Naive thymus-derived CD8-positive, alpha-beta T cell (primary cell): ENCODE measurements at regions of chr6 and their contacts with region 1.

Region 1: DNA sequence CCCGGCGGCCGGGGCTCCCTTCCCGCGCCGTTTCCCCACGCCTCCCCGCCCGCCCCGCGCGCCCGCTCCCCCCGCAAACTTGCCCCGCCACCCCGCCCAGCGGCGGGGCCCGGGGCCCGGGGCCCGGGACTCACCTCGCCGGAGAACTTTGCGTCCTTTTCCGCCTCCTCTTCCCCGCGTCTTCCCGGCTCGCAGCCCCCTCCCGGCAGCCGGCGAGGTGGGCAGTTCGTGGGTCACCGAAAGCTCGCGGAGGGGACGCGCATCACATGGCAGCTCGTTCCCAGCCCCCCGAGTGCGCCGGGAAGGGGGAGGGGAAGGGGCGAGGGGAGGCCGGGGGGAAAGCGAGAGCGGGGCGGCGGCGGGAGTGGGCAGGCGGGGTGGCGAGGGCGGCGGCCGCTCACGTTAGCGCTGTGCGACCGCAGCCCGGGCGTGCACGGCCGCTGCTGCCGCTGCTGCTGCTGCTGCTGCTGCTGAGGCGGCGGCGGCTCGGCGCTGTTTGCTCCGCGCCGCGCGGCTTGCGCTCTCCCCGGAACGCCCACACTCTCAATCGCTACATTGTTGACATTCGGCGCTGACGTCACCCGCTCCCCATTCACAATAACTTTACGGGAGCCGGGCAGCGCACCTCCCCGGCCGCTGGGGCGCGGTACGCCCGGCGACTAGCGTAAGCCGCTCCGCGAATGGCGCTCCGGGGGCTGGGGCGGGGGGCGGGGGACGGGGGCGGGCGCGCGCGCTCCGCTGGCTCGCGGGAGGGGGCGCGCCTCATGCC is at the start of gene BACH2:
- DNase-seq: peak; percentile 87 to 98 (median 95)
- ATAC-seq: peak; percentile 69 to 73
- H3K4me3 Mint-ChIP-seq: peak within 1 kb of the TSS; percentile 84 to 99 (median 92)
- H3K27ac Mint-ChIP-seq: peak within 1 kb of the TSS; percentile 89 to 99 (median 97)
- H3K4me1 Mint-ChIP-seq: peaks cover 16 to 46% (median 34%) of the 10 kb centered on the region in 4 donors
- H3K27me3 Mint-ChIP-seq: no peaks in the 10 kb centered on the region
- polyA plus RNA-seq, gene BACH2: 17.5 to 29.3 (median 21.7) TPM

Region 2: GRCh38 chr6:90216072-90216977 is 80.2 kb before region 1 on chr6:
- POLR2A ChIA-PET with region 1: interaction called, 27 read pairs
- DNase-seq: peak; percentile 34 to 76 (median 63)
- ATAC-seq: peak; percentile 36 to 64
- H3K4me3 Mint-ChIP-seq: peak overlapping the region in 8 of 10 donors; percentile 52 to 79 (median 71)
- H3K27ac Mint-ChIP-seq: no peak overlapping the region
- H3K4me1 Mint-ChIP-seq: peaks cover 24 to 37% (median 31%) of the 10 kb centered on the region in 4 donors
- H3K27me3 Mint-ChIP-seq: no peaks in the 10 kb centered on the region

Region 3: DNA sequence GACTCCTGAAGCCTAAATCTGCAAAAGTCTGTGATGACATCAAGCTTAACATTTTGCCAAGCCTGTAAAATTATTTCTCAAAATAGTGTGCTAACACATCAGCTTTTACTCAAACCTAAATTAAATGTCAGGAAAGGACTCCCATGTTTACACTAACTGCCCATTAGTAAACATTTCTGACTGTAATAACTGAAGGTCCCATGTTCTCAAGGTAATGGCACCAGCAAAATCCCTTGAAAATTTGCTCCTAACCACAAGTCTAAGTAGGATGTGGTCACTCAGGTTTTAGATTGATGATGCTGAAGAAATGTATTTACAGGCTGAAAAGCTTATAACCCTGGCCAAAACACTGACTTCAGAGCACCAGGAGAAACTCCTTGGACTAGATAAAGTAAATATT is 32.9 kb before region 1 on chr6:
- POLR2A ChIA-PET with region 1: interaction called, 17 read pairs
- DNase-seq: no peak
- ATAC-seq: no peak
- H3K4me3 Mint-ChIP-seq: peak overlapping the region in 6 of 10 donors; percentile 28 to 70 (median 48)
- H3K27ac Mint-ChIP-seq: peak overlapping the region; percentile 14 to 99 (median 92)
- H3K4me1 Mint-ChIP-seq: peaks cover 43 to 96% (median 94%) of the 10 kb centered on the region in 4 donors
- H3K27me3 Mint-ChIP-seq: no peaks in the 10 kb centered on the region

Region 4: DNA sequence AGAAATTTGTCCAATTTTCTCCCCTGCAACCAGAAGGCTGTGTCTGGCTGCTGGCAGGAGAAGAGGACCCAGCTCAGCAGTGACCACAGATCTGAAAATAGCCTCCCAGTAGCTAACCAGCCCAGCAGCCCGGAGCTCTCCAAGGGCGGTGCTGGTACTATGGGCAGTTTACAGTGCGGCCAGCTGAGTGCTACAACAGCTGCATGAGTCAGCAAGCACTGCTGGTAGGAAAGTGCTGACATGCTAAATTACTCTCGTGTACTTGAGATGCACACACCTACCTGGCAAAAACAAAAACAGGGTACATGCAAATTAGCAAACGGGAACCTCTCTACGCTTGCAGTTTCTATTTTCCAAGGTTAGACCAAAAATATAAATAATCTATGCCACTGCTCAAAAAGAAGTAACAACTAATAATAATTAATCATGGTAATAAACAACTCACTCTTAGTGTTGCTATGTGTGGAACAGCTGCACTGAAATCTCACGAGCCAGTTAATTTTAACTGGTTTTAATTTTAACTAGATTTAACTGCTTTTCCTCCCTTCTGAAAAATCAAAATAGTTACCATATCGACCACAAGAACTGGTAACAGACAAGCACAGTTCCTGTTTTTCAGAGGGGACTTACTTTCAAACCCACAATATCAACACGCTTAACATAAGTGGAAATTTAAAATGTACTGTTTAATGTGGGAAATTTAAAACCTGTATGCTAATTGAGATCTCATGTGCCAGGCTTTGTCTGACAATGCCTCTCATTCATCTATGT is 10.7 kb before region 1 on chr6:
- POLR2A ChIA-PET with region 1: interaction called, 65 read pairs
- DNase-seq: peak in 7 of 10 donors; percentile 37 to 87 (median 66)
- ATAC-seq: peak; percentile 60 to 72
- H3K4me3 Mint-ChIP-seq: peak overlapping the region; percentile 76 to 95 (median 86)
- H3K27ac Mint-ChIP-seq: peak overlapping the region; percentile 89 to 99 (median 94)
- H3K4me1 Mint-ChIP-seq: peaks cover 58 to 95% (median 92%) of the 10 kb centered on the region in 4 donors
- H3K27me3 Mint-ChIP-seq: no peaks in the 10 kb centered on the region

Region 5: GRCh38 chr6:90393232-90393884 is 96.8 kb after region 1 on chr6:
- POLR2A ChIA-PET with region 1: interaction called, 10 read pairs
- DNase-seq: peak; percentile 42 to 85 (median 78)
- ATAC-seq: peak; percentile 66 to 81
- H3K4me3 Mint-ChIP-seq: peak overlapping the region in 5 of 10 donors; percentile 6 to 62 (median 49)
- H3K27ac Mint-ChIP-seq: peak overlapping the region in 9 of 10 donors; percentile 13 to 68 (median 58)
- H3K4me1 Mint-ChIP-seq: peaks cover 20 to 41% (median 29%) of the 10 kb centered on the region in 4 donors
- H3K27me3 Mint-ChIP-seq: no peaks in the 10 kb centered on the region